IMR-90 (cell line): ENCODE measurements at regions of chr11 and their contacts with region 1.

Region 1: DNA sequence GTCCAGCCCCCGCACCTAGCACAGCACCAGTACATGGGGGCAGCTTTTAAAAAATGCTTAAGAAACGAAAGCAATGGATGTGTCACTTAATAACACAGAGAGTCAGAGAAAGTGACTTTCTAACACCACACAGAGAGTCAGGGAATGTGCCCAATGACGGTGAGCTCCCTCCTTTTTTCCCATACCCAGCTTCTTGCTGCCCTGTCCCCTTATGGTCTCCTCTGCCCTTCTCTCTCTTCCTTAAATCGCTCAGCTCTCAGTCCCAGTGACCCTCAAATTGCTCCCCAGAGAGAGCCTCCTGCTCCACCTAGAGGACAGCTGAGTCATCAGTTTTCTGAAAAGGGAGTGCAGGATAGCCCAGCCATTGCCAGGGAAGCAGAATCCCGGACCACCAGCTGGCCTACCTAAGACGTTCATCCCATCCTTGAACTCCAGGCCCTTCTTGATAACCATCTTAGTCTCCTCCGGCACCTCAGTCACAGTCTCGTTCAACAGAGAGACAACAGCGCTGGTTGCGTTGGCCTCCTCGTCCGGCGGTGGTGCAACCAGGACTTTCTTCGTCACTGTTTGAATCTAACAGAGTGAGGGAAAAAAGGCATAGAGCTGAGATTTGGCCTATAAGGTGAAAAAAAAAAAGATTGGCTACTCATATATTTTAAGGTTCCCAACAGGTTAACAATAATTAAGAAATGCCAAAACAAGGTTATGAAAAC is 113.5 kb downstream of the SLC1A2 start:
- DNase-seq: peak; percentile 56
- ATAC-seq: peak; percentile 82
- H3K4me3 ChIP-seq: no peak overlapping the region
- H3K27ac ChIP-seq: peak overlapping the region; percentile 10; the same call in 1 of the 2 replicates
- H3K4me1 ChIP-seq: peaks cover 14% of the 10 kb centered on the region
- H3K27me3 ChIP-seq: no peaks in the 10 kb centered on the region
- CTCF ChIP-seq: peak; percentile 49
- POLR2A ChIP-seq: no peak
- RAD21 ChIP-seq: peak; percentile 55

Region 2: GRCh38 chr11:35006389-35007128 is 299.3 kb before region 1 on chr11:
- CTCF ChIA-PET with region 1: no interaction called
- POLR2A ChIA-PET with region 1: no interaction called
- dilution Hi-C with region 1: no loop called
- in situ Hi-C with region 1: no loop called
- intact Hi-C with region 1: loop called (anchors 10 kb)
- DNase-seq: peak; percentile 37
- ATAC-seq: no peak
- H3K4me3 ChIP-seq: no peak overlapping the region
- H3K27ac ChIP-seq: no peak overlapping the region
- H3K4me1 ChIP-seq: peaks cover 14% of the 10 kb centered on the region
- H3K27me3 ChIP-seq: no peaks in the 10 kb centered on the region
- CTCF ChIP-seq: no peak
- POLR2A ChIP-seq: no peak
- RAD21 ChIP-seq: no peak

Region 3: GRCh38 chr11:35134403-35135148 is 171.2 kb before region 1 on chr11:
- CTCF ChIA-PET with region 1: no interaction called
- POLR2A ChIA-PET with region 1: no interaction called
- dilution Hi-C with region 1: no loop called
- in situ Hi-C with region 1: no loop called
- intact Hi-C with region 1: no loop called
- DNase-seq: no peak
- ATAC-seq: no peak
- H3K4me3 ChIP-seq: no peak overlapping the region
- H3K27ac ChIP-seq: no peak overlapping the region
- H3K4me1 ChIP-seq: peaks cover 7% of the 10 kb centered on the region
- H3K27me3 ChIP-seq: no peaks in the 10 kb centered on the region
- CTCF ChIP-seq: no peak
- POLR2A ChIP-seq: no peak
- RAD21 ChIP-seq: no peak

Region 4: DNA sequence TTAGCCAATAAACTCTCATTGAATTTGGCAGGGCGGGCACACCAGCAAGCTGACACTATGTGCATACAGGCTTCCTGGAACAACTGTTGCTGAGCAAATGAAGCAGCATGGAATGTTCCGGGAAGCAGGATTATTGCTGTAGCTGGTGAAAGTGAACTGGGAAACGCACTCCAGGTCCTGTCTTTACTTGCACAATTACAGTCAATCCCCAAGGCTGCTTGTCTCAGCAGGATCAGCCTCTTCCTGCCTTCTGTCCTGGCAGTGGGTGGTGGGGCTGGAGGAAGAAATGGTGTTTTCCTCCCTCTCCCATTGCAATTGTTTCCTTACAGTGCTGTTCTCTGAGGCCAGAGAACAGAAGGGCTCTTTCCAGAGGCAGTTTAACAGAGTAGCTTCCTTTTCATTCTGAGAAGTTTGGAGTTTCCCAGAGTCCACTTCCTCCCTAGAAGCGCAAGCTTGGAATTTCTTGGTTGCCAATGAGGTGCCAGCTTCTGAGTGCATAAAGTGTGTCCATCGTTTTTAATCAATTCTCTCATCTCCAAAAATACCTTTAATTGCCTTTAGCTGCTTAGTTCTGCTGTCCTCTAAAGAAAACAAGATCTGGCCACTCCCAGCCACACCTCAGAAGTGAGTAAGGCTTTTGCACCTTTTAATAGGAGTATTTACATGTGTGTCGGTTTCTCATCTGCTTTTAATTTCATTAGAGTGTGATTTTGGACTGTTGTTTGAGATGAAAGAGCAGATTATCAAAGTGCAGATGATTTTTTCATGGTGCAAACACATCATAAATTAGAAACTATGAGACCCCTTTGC is 146.9 kb before region 1 on chr11:
- CTCF ChIA-PET with region 1: interaction called, 3 read pairs
- POLR2A ChIA-PET with region 1: no interaction called
- dilution Hi-C with region 1: no loop called
- in situ Hi-C with region 1: no loop called
- intact Hi-C with region 1: loop called (anchors 10 kb)
- DNase-seq: no peak
- ATAC-seq: no peak
- H3K4me3 ChIP-seq: no peak overlapping the region
- H3K27ac ChIP-seq: peak overlapping the region; percentile 65; the same call in 1 of the 2 replicates
- H3K4me1 ChIP-seq: peaks cover 48% of the 10 kb centered on the region
- H3K27me3 ChIP-seq: no peaks in the 10 kb centered on the region
- CTCF ChIP-seq: no peak
- POLR2A ChIP-seq: no peak
- RAD21 ChIP-seq: no peak

Region 5: GRCh38 chr11:35232891-35233330 is 72.9 kb before region 1 on chr11:
- CTCF ChIA-PET with region 1: interaction called, 6 read pairs
- POLR2A ChIA-PET with region 1: no interaction called
- dilution Hi-C with region 1: no loop called
- in situ Hi-C with region 1: no loop called
- intact Hi-C with region 1: loop called (anchors 5 kb)
- DNase-seq: peak; percentile 83
- ATAC-seq: peak; percentile 62
- H3K4me3 ChIP-seq: no peak overlapping the region
- H3K27ac ChIP-seq: peak overlapping the region; percentile 86
- H3K4me1 ChIP-seq: peaks cover 16% of the 10 kb centered on the region
- H3K27me3 ChIP-seq: no peaks in the 10 kb centered on the region
- CTCF ChIP-seq: no peak
- POLR2A ChIP-seq: no peak
- RAD21 ChIP-seq: no peak

Region 6: GRCh38 chr11:35507688-35508087 is 201.9 kb after region 1 on chr11:
- CTCF ChIA-PET with region 1: no interaction called
- POLR2A ChIA-PET with region 1: no interaction called
- dilution Hi-C with region 1: no loop called
- in situ Hi-C with region 1: no loop called
- intact Hi-C with region 1: no loop called
- DNase-seq: no peak
- ATAC-seq: no peak
- H3K4me3 ChIP-seq: no peak overlapping the region
- H3K27ac ChIP-seq: no peak overlapping the region
- H3K4me1 ChIP-seq: peaks cover 7% of the 10 kb centered on the region
- H3K27me3 ChIP-seq: no peaks in the 10 kb centered on the region
- CTCF ChIP-seq: peak; percentile 30
- POLR2A ChIP-seq: no peak
- RAD21 ChIP-seq: peak; percentile 24; the same call in 1 of the 2 replicates